ENCODE measurements at regions of chr15 and their contacts with region 1.

Region 1: DNA sequence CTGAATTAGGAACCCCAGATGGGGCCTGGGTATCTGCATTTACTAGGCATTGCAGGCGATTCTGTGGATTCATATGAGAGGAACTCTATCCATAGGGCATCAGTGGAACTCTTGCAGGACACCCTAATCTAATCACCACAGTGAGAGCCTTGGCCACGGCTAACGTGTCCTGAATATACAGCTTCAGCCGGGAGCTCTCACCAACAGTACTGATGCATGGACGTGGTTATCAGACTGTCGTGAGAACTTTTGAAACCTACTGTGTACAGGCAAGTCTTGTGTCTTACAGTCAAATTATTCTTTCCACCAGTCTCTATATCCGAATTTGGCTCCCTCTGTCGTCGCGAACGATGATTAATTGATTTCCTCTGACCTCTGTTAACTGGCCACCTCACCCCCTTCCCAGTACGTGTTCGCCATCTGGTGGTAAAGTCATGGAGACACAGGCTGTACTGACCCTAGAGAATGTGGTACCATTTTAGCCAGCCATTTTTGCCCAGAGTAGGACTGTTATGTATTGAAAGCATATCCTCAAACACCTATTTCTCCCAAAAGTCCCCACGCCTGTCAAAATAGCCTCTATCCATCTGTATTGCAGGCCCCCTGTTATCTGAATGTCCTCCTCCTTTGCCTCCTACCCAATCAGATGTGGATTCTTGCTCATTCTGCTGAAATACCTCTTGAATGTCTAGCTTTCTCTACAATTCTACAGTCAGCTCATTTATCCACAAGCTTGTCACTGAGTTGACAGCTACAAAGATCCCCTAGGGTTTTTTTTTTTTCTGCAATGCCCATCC is 39.7 kb downstream of the GLDN start:
- DNase-seq: peak; percentile 72
- H3K4me3 Mint-ChIP-seq: no peak overlapping the region
- H3K27ac Mint-ChIP-seq: no peak overlapping the region
- H3K4me1 Mint-ChIP-seq: no peaks in the 10 kb centered on the region
- H3K27me3 Mint-ChIP-seq: peaks cover 83% of the 10 kb centered on the region
- CTCF ChIP-seq: peak; percentile 82

Region 2: DNA sequence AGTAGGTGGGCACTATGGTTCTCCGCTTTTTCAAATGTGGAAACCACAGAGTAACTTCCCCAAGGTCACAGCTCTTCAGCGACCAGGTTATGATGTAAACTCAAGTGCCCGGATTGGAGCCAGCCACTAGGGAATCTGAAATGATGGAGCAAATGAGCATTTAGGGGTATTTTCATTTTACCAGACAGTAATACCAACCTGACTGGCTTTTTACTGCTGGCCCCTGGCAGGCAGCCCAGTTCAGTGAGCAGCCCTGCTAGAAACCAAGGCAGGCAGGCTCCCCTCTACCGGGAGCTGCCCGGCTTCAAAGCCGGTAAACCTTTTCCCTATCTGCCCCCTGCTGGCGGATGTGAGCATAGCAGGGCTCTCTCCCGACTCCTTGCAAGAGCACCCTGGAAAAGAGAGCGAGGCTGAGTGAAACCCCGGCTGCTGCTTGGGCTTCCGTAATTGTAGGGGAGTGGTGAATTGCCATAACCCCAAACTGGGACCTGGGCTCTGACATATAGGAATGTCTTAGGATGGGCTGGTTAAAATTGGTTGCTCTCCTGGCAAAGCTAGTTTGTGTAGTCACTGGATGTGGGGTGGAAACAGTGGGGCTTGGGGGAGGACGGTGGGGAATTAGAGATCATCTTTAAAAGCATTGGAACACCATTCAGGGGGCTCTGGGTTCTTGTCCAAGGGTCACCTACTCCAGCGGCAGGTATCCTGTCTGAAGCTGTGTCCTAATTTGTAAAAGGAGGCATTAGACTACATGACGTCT is 188.5 kb before region 1 on chr15:
- CTCF ChIA-PET with region 1: interaction called, 3 read pairs
- intact Hi-C with region 1: loop called (anchors 1 kb)
- DNase-seq: peak; percentile 94
- H3K4me3 Mint-ChIP-seq: no peak overlapping the region
- H3K27ac Mint-ChIP-seq: no peak overlapping the region
- H3K4me1 Mint-ChIP-seq: no peaks in the 10 kb centered on the region
- H3K27me3 Mint-ChIP-seq: peaks cover 63% of the 10 kb centered on the region
- CTCF ChIP-seq: peak; percentile 98

Region 3: GRCh38 chr15:51281368-51281967 is 99.7 kb before region 1 on chr15:
- CTCF ChIA-PET with region 1: interaction called, 27 read pairs
- intact Hi-C with region 1: loop called (anchors 1 kb)
- DNase-seq: peak; percentile 69
- H3K4me3 Mint-ChIP-seq: no peak overlapping the region
- H3K27ac Mint-ChIP-seq: no peak overlapping the region
- H3K4me1 Mint-ChIP-seq: peaks cover 7% of the 10 kb centered on the region
- H3K27me3 Mint-ChIP-seq: peaks cover 95% of the 10 kb centered on the region
- CTCF ChIP-seq: peak; percentile 64

Region 4: GRCh38 chr15:51315721-51316120 is 65.5 kb before region 1 on chr15:
- CTCF ChIA-PET with region 1: no interaction called
- intact Hi-C with region 1: no loop called
- DNase-seq: no peak
- H3K4me3 Mint-ChIP-seq: no peak overlapping the region
- H3K27ac Mint-ChIP-seq: no peak overlapping the region
- H3K4me1 Mint-ChIP-seq: no peaks in the 10 kb centered on the region
- H3K27me3 Mint-ChIP-seq: peaks cover 49% of the 10 kb centered on the region
- CTCF ChIP-seq: no peak

Region 5: DNA sequence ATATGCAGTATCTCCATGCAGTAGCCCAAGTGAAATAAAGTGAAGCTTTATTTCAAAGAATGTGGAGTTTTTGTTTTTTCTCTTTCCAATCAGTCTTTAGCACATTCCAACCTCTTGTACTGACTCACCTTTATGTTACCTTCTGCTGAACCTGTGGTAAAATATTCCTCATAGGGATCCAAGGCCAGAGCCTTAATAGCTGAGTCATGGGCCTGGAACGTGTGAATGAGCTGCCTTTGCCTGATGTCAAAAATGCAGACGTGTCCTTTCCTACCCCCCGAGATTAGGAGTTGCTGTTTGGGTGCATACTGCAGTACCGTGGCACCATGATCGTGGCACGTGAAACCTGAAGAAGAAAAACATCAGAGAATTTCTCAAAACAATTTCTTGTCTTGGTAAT is 68.8 kb after region 1 on chr15:
- CTCF ChIA-PET with region 1: no interaction called
- intact Hi-C with region 1: loop called (anchors 5 kb)
- DNase-seq: peak; percentile 64
- H3K4me3 Mint-ChIP-seq: peak overlapping the region; percentile 21
- H3K27ac Mint-ChIP-seq: no peak overlapping the region
- H3K4me1 Mint-ChIP-seq: peaks cover 46% of the 10 kb centered on the region
- H3K27me3 Mint-ChIP-seq: no peaks in the 10 kb centered on the region
- CTCF ChIP-seq: no peak

Measured in Calu3 (cell line).